Stomach (tissue), 19 donors: ENCODE measurements at regions of chr19 and their contacts with region 1.

Region 1: DNA sequence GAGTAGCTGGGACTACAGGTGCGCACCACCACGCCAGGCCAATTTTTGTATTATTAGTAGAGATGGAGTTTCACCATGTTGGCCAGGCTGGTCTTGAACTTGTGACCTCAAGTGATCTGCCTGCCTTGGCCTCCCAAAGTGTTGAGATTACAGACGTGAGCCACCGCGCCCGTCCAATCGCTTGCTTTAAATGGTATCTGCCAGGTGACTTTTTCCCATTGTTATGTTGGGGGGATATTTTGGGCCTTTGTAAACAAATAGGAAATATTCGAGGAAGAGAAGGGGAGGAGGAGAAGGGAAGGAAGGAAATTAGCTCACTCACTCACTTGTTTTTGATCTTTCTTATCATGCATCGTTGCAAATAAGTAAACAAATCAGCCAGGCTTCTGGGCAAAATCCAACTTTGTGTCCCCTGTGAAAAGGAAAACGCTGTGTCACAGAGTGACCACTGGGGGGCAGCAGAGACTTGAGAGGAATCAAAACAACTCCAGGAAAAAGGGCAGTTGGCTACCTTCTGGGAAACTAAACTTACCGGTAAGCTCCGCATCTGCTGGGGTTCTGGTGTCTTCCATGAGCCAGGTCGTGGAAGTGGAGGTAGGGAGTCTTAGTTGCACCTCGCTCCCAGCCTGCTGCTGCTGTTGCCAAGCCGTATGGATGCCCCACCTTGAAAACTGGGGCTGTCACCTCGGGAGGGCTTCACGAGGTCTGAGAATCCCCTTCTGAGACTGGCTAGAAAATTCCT is 9.3 kb upstream of the RANBP3 start:
- DNase-seq: peak; percentile 89 to 94
- H3K4me3 ChIP-seq: peak overlapping the region; percentile 35 to 43 (median 39)
- H3K27ac ChIP-seq: peak overlapping the region in 1 of 5 donors; percentile 56
- H3K4me1 ChIP-seq: peaks cover 7 to 59% (median 38%) of the 10 kb centered on the region in 4 donors
- H3K27me3 ChIP-seq: no peaks in the 10 kb centered on the region
- CTCF ChIP-seq: peak in 6 of 7 experiments; percentile 65 to 98 (median 94)
- EP300 ChIP-seq: no peak
- POLR2A ChIP-seq: no peak

Region 2: DNA sequence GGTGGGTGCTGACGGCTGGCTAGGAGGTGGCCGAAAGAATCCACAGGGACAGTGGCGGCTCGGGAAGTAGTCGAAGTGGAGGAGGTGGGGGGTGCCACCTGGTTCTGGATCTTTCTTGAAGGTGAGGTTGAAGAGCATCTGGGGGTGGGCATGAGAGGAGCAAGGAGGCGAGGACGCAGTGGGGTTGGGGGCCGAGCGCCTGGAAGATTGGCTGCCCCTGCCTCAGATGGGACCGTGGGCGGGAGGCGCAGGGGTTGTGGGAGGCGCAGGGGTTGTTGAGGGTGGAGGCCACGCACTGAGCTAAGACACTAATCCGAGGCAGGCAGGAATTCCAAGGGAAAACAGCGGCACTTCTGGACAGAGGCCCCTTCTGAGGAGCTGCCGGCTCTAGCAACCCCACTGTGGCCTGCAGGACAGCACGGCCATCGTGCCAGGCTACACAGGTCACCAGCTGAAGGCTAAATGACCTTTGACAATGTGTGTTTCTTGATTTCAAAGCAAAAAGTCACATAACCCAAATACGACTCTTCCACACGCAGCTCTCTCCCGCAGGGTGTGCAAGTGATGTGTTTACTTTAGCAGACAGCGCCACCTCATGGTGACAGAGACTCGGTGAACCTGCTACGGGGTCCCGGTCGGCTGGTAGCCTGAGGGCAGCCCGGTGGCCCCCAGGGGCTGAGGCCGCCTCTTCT is 34.8 kb after region 1 on chr19:
- intact Hi-C with region 1: loop called (anchors 5 kb)
- DNase-seq: peak; percentile 89 to 93
- H3K4me3 ChIP-seq: no peak overlapping the region
- H3K27ac ChIP-seq: peak overlapping the region in 4 of 5 donors; percentile 14 to 73 (median 51)
- H3K4me1 ChIP-seq: peaks cover 18 to 37% (median 29%) of the 10 kb centered on the region in 4 donors
- H3K27me3 ChIP-seq: no peaks in the 10 kb centered on the region
- CTCF ChIP-seq: peak in 5 of 7 experiments; percentile 64 to 89 (median 78)
- EP300 ChIP-seq: no peak
- POLR2A ChIP-seq: no peak

Region 3: GRCh38 chr19:6056801-6057650 is 69.8 kb after region 1 on chr19:
- intact Hi-C with region 1: no loop called
- DNase-seq: peak; percentile 47 to 94
- H3K4me3 ChIP-seq: peak overlapping the region in 1 of 4 donors; percentile 1
- H3K27ac ChIP-seq: peak overlapping the region; percentile 71 to 90 (median 89)
- H3K4me1 ChIP-seq: peaks cover 36 to 62% (median 50%) of the 10 kb centered on the region in 4 donors
- H3K27me3 ChIP-seq: no peaks in the 10 kb centered on the region
- CTCF ChIP-seq: no peak
- EP300 ChIP-seq: peak; percentile 6
- POLR2A ChIP-seq: no peak